ENCODE measurements at regions of chr15 and their contacts with region 1.

Region 1: GRCh38 chr15:73897441-73898261 is 24.3 kb downstream of the TBC1D21 start:
- H3K4me3 ChIP-seq: no peak overlapping the region
- H3K27ac ChIP-seq: no peak overlapping the region
- H3K4me1 ChIP-seq: no peaks in the 10 kb centered on the region
- CTCF ChIP-seq: peak; percentile 96

Region 2: GRCh38 chr15:73781038-73781925 is 116.4 kb before region 1 on chr15:
- CTCF ChIA-PET with region 1: no interaction called
- POLR2A ChIA-PET with region 1: no interaction called
- H3K4me3 ChIP-seq: no peak overlapping the region
- H3K27ac ChIP-seq: no peak overlapping the region
- H3K4me1 ChIP-seq: no peaks in the 10 kb centered on the region
- CTCF ChIP-seq: peak; percentile 70; the same call in 1 of the 2 replicates

Region 3: DNA sequence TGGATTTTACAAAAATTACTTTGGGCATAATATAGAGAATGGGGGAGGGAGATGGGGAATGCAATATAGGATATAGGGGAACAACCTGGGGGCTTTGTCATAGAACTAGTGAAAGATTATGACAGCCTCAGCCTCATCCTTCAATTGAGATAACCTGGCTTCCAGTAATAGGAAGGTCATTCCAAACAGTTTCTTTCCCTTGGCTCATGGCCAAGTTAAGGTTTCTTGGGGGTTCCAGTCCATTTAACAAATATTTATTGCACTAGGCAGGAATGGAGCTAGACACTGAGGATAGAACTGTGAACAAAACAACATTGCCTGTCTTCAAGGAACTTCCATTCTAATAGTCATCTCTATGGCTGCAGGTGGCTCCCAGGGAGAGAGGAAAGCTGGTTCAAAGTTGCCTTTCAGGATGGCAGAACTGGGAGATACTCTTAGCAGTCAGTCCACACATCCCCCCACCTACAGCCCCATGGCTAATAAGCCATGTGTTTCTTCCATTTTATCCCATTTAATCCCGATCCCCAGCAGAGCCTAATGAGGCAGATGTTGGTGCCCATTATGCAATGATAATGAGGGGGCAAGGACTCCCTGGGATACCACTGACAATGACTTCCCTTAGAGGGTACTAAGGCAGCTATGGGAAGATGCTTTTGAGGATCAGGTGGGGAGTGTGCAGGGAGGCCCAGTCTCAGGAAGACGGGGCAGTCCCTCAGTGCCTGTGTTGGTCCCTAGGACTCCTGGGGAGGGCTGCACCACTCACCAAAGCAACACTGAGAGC is 68.3 kb before region 1 on chr15:
- CTCF ChIA-PET with region 1: no interaction called
- POLR2A ChIA-PET with region 1: no interaction called
- H3K4me3 ChIP-seq: no peak overlapping the region
- H3K27ac ChIP-seq: no peak overlapping the region
- H3K4me1 ChIP-seq: no peaks in the 10 kb centered on the region
- CTCF ChIP-seq: no peak

Region 4: DNA sequence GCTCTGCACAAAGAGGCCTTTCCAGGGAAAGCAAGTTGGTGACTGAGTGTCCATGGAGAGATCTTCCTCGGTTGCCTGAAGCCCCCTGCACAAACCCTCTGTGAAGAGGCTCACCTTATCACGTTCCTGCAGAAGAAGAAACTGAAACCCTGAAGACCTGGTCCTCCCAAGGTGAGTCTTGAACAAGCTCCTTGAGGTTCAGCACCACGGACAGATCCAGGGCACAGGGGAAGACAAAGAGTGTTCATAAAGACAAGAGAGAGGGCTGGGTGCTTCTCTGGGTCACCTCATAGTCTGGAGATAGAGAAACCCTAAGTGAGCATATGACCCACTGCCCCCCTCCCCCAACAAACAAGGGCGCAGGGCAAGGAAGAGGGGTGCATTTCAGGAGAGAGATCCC is 46.0 kb before region 1 on chr15:
- CTCF ChIA-PET with region 1: no interaction called
- POLR2A ChIA-PET with region 1: no interaction called
- H3K4me3 ChIP-seq: no peak overlapping the region
- H3K27ac ChIP-seq: no peak overlapping the region
- H3K4me1 ChIP-seq: no peaks in the 10 kb centered on the region
- CTCF ChIP-seq: no peak

Region 5: GRCh38 chr15:73873889-73874511 is 23.7 kb before region 1 on chr15:
- CTCF ChIA-PET with region 1: interaction called, 25 read pairs
- POLR2A ChIA-PET with region 1: no interaction called
- H3K4me3 ChIP-seq: no peak overlapping the region
- H3K27ac ChIP-seq: no peak overlapping the region
- H3K4me1 ChIP-seq: peaks cover 5% of the 10 kb centered on the region; the same call in 1 of the 2 replicates
- CTCF ChIP-seq: 0 out of 2 replicates have a peak, but pooled peaks have one; percentile 13

Region 6: GRCh38 chr15:73886717-73887345 is 10.8 kb before region 1 on chr15:
- CTCF ChIA-PET with region 1: interaction called, 24 read pairs
- POLR2A ChIA-PET with region 1: no interaction called
- H3K4me3 ChIP-seq: no peak overlapping the region
- H3K27ac ChIP-seq: no peak overlapping the region
- H3K4me1 ChIP-seq: no peaks in the 10 kb centered on the region
- CTCF ChIP-seq: no peak

Region 7: DNA sequence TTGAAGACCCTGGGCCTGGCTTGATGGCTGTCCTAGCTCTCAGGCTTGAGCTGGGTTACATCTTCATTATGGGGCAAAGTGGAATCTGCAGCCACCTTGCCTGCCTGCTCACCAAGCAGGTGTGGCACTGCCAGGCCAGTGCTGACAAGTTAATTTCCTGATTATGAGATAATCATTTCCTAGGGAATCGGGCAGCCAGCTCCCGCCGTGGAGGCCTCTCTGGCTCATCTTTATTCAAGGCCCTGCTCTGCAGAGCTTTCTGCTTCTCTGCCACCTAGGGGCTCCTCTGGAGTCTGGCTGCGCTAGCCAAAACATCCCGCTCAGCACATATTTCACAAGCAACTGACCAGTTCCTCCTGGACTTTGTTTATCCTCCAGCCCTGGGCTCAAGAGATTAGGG is 38.5 kb after region 1 on chr15:
- CTCF ChIA-PET with region 1: interaction called, 11 read pairs
- POLR2A ChIA-PET with region 1: no interaction called
- H3K4me3 ChIP-seq: no peak overlapping the region
- H3K27ac ChIP-seq: no peak overlapping the region
- H3K4me1 ChIP-seq: peaks cover 3% of the 10 kb centered on the region; the same call in 1 of the 2 replicates
- CTCF ChIP-seq: 0 out of 2 replicates have a peak, but pooled peaks have one; percentile 15

Region 8: GRCh38 chr15:73964736-73965093 is 67.1 kb after region 1 on chr15:
- CTCF ChIA-PET with region 1: interaction called, 22 read pairs
- POLR2A ChIA-PET with region 1: no interaction called
- H3K4me3 ChIP-seq: no peak overlapping the region
- H3K27ac ChIP-seq: no peak overlapping the region
- H3K4me1 ChIP-seq: peaks cover 3% of the 10 kb centered on the region; the same call in 1 of the 2 replicates
- CTCF ChIP-seq: peak; percentile 98

Region 9: DNA sequence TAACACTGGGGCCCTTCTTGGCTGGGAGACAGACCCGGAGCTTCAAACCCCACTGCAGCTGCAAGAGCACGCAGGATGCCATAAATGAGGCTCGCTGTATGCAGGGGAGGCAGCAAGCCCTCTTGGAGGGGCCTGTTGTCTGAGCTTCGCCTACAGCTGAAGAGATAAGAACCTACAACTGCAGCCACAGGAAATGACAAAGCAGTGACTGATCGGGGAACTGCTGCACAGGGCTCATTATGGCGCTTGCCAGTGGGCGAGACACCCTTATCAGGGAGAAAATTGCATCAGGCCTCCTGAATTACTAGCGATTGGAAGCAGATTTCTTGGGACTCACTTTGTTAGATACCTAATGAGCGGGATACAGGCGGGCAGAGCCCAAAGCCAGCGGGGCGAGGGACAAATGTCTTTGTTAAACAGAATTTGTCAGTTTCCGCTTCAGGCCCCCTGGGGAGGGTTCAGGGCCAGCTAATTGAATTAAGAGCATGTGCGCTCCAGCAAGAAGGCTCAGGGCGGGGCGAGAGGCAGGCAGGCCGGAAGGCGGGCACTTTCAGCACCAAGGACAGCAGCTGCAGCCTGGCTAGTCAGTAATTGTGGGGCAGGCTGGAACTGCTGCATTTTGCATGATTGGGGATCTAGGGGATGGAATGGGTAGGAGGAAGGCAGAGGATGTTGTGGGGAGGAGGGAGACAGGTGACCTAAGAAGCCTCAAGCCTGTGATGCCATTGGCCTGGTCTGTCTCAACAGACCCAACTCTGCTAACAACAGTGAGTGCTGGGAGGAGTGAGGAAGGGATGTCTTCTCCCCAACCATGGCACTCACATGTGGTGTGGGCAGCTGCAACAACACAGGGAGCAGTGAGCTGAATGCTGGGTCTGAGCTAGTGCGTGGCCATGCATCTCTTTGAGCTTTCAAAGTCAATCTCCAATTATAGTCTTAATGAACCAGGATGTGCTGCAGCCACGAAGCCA is 393.7 kb after region 1 on chr15:
- CTCF ChIA-PET with region 1: no interaction called
- POLR2A ChIA-PET with region 1: no interaction called
- H3K4me3 ChIP-seq: no peak overlapping the region
- H3K27ac ChIP-seq: no peak overlapping the region
- H3K4me1 ChIP-seq: no peaks in the 10 kb centered on the region
- CTCF ChIP-seq: no peak